ENCODE measurements at regions of chr16 and their contacts with region 1.

Region 1: GRCh38 chr16:81444448-81445121 is at the start of gene CMIP:
- DNase-seq: peak; percentile 58 to 91 (median 72)
- ATAC-seq: peak; percentile 58
- H3K4me3 ChIP-seq: peak within 1 kb of the TSS; percentile 77
- H3K4me3 Mint-ChIP-seq: peak within 1 kb of the TSS; percentile 96
- H3K27ac ChIP-seq: peak within 1 kb of the TSS; percentile 41 to 48
- H3K27ac Mint-ChIP-seq: peak within 1 kb of the TSS; percentile 99
- H3K4me1 ChIP-seq: peaks cover 50% of the 10 kb centered on the region
- H3K4me1 Mint-ChIP-seq: peaks cover 54% of the 10 kb centered on the region
- H3K27me3 ChIP-seq: no peaks in the 10 kb centered on the region
- H3K27me3 Mint-ChIP-seq: no peaks in the 10 kb centered on the region
- CTCF ChIP-seq: no peak
- total RNA-seq, gene CMIP: 33.5 to 35.3 TPM

Region 2: GRCh38 chr16:81077076-81077940 is 367.3 kb before region 1 on chr16 and contains the start of gene C16orf46:
- CTCF ChIA-PET with region 1: no interaction called
- POLR2A ChIA-PET with region 1: no interaction called
- intact Hi-C with region 1: loop called in 1 of 2 experiments (anchors 10 kb)
- DNase-seq: peak; percentile 93 to 99 (median 96)
- ATAC-seq: peak; percentile 68
- H3K4me3 ChIP-seq: peak within 1 kb of the TSS; percentile 90
- H3K4me3 Mint-ChIP-seq: no peak within 1 kb of the TSS
- H3K27ac ChIP-seq: peak within 1 kb of the TSS; percentile 95 to 97
- H3K27ac Mint-ChIP-seq: no peak within 1 kb of the TSS
- H3K4me1 ChIP-seq: peaks cover 15% of the 10 kb centered on the region
- H3K4me1 Mint-ChIP-seq: no peaks in the 10 kb centered on the region
- H3K27me3 ChIP-seq: no peaks in the 10 kb centered on the region
- H3K27me3 Mint-ChIP-seq: no peaks in the 10 kb centered on the region
- CTCF ChIP-seq: no peak
- total RNA-seq, gene C16orf46: 0.55 TPM in 1 of 2 experiments, not detected in the other

Region 3: DNA sequence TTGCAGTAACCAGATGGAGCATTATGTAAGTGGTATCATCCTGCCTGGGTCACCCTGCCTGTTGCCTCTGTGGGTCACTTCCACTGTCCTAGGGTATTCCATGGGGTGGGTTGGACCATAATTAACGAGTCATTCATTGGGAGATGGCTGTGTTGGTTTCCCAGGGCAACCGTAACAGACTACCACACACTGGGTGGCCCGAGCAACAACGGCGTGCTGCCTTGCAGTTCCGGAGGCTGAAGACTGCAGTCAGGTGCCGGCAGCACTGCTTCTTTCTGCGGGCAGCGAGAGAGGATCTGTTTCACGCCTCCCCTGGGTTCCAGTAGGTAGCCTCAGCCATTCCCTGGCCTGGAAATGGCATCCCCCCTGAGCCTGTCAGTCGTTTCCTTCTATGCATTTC is 28.8 kb before region 1 on chr16:
- CTCF ChIA-PET with region 1: no interaction called
- POLR2A ChIA-PET with region 1: no interaction called
- intact Hi-C with region 1: no loop called
- DNase-seq: no peak
- ATAC-seq: no peak
- H3K4me3 ChIP-seq: no peak overlapping the region
- H3K4me3 Mint-ChIP-seq: no peak overlapping the region
- H3K27ac ChIP-seq: no peak overlapping the region
- H3K27ac Mint-ChIP-seq: no peak overlapping the region
- H3K4me1 ChIP-seq: no peaks in the 10 kb centered on the region
- H3K4me1 Mint-ChIP-seq: peaks cover 6% of the 10 kb centered on the region
- H3K27me3 ChIP-seq: no peaks in the 10 kb centered on the region
- H3K27me3 Mint-ChIP-seq: no peaks in the 10 kb centered on the region
- CTCF ChIP-seq: no peak

Region 4: DNA sequence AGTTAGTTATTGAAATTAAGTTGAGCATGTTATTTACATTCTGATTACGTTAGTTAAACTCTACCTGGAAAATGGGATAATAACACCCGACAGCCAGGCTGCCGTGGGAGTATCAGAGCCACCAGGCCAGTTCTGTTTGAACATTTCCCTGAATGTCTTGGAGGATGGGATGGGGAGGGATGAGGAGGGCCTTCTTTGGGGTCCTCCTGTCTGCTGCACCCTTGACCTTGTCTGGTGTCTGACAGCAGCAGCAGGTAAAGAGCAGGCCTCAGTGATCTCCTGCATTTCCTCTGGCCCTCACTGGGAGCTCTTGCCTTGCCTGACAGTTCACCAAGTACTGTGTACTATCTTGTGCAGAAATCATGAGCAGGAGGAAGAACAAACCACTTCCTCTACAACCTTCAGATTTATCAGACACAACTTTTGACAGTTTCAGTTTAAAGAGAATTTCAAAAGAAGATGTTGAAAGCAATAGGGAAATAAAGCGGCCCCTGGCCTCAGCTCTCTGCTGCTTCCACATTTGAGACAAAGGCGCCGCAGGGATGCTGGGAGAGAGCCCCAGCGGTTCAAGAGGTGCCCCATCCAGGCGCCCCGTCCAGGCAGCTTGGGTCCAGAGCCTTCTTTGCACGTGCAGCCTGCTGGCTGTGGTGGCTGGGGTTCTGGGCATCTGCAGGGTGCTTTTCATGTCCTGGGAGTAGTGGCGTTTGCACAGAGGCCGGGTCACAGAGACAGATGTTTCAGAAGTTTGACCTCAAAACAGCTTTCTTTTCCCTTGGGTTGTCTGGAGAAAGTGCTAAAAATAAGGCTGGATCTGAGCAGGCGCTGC is 25.3 kb after region 1 on chr16:
- CTCF ChIA-PET with region 1: interaction called, 4 read pairs
- POLR2A ChIA-PET with region 1: interaction called, 20 read pairs
- intact Hi-C with region 1: loop called in 1 of 2 experiments (anchors 2 kb)
- DNase-seq: peak in 13 of 14 experiments; percentile 14 to 85 (median 33)
- ATAC-seq: peak; percentile 95
- H3K4me3 ChIP-seq: peak overlapping the region; percentile 33
- H3K4me3 Mint-ChIP-seq: peak overlapping the region; percentile 70
- H3K27ac ChIP-seq: peak overlapping the region; percentile 49 to 81
- H3K27ac Mint-ChIP-seq: peak overlapping the region; percentile 86
- H3K4me1 ChIP-seq: peaks cover 87% of the 10 kb centered on the region
- H3K4me1 Mint-ChIP-seq: peaks cover 81% of the 10 kb centered on the region
- H3K27me3 ChIP-seq: no peaks in the 10 kb centered on the region
- H3K27me3 Mint-ChIP-seq: no peaks in the 10 kb centered on the region
- CTCF ChIP-seq: no peak

Region 5: GRCh38 chr16:81521151-81521626 is 76.6 kb after region 1 on chr16:
- CTCF ChIA-PET with region 1: no interaction called
- POLR2A ChIA-PET with region 1: no interaction called
- intact Hi-C with region 1: loop called (anchors 2 to 5 kb)
- DNase-seq: peak; percentile 52 to 94 (median 70)
- ATAC-seq: peak; percentile 62
- H3K4me3 ChIP-seq: no peak overlapping the region
- H3K4me3 Mint-ChIP-seq: no peak overlapping the region
- H3K27ac ChIP-seq: peak overlapping the region; percentile 5 to 68
- H3K27ac Mint-ChIP-seq: peak overlapping the region; percentile 81
- H3K4me1 ChIP-seq: peaks cover 64% of the 10 kb centered on the region
- H3K4me1 Mint-ChIP-seq: peaks cover 56% of the 10 kb centered on the region
- H3K27me3 ChIP-seq: no peaks in the 10 kb centered on the region
- H3K27me3 Mint-ChIP-seq: no peaks in the 10 kb centered on the region
- CTCF ChIP-seq: no peak

Region 6: GRCh38 chr16:83272843-83273242 is 1828.3 kb after region 1 on chr16:
- CTCF ChIA-PET with region 1: no interaction called
- POLR2A ChIA-PET with region 1: no interaction called
- intact Hi-C with region 1: no loop called
- DNase-seq: no peak
- ATAC-seq: no peak
- H3K4me3 ChIP-seq: no peak overlapping the region
- H3K4me3 Mint-ChIP-seq: no peak overlapping the region
- H3K27ac ChIP-seq: no peak overlapping the region
- H3K27ac Mint-ChIP-seq: no peak overlapping the region
- H3K4me1 ChIP-seq: no peaks in the 10 kb centered on the region
- H3K4me1 Mint-ChIP-seq: no peaks in the 10 kb centered on the region
- H3K27me3 ChIP-seq: no peaks in the 10 kb centered on the region
- H3K27me3 Mint-ChIP-seq: peaks cover 15% of the 10 kb centered on the region
- CTCF ChIP-seq: no peak

Measured in CD4-positive, alpha-beta T cell (primary cell).